Gastrocnemius medialis (tissue), 4 donors: ENCODE measurements at regions of chr22 and their contacts with region 1.

Region 1: GRCh38 chr22:36387752-36388518 is at the start of gene MYH9:
- DNase-seq: peak; percentile 99 to 100
- ATAC-seq: peak; percentile 83 to 85
- H3K4me3 ChIP-seq: peak within 1 kb of the TSS; percentile 73 to 93 (median 84)
- H3K27ac ChIP-seq: peak within 1 kb of the TSS; percentile 84 to 97 (median 92)
- H3K4me1 ChIP-seq: peaks cover 24 to 41% of the 10 kb centered on the region in 2 donors
- H3K27me3 ChIP-seq: no peaks in the 10 kb centered on the region
- CTCF ChIP-seq: peak in 1 of 5 experiments; percentile 9
- POLR2A ChIP-seq: peak; percentile 99
- total RNA-seq, gene MYH9: 38.9 to 115 (median 104) TPM

Region 2: DNA sequence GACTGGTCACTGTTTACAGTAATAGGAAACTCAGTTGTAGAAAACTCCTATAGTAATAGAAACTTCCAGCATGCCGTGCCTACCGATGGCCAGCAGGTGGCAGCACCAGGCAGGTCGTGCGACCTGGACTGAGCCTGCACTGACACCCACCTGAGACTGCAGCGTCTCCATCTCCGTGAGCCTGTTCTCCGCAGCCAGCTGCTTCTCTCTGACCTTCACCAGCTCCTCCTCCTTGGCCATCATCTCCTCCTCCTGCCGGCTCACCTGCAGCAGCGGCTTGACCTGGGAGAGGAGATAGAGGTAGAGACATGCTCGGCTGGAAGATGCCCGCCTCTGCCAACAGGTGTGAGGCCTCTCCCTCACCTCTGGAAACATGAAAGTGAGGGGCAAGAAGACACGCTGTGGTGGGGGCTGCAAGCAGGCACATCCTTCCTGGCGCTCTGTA is 86.5 kb before region 1 on chr22:
- in situ Hi-C with region 1: no loop called
- intact Hi-C with region 1: loop called (anchors 2 kb)
- DNase-seq: peak in 1 of 2 donors; percentile 65
- ATAC-seq: peak; percentile 59 to 83
- H3K4me3 ChIP-seq: no peak overlapping the region
- H3K27ac ChIP-seq: peak overlapping the region in 2 of 4 donors; percentile 29 to 31
- H3K4me1 ChIP-seq: no peaks in the 10 kb centered on the region
- H3K27me3 ChIP-seq: no peaks in the 10 kb centered on the region
- CTCF ChIP-seq: peak; percentile 78 to 97 (median 96)
- POLR2A ChIP-seq: no peak

Region 3: DNA sequence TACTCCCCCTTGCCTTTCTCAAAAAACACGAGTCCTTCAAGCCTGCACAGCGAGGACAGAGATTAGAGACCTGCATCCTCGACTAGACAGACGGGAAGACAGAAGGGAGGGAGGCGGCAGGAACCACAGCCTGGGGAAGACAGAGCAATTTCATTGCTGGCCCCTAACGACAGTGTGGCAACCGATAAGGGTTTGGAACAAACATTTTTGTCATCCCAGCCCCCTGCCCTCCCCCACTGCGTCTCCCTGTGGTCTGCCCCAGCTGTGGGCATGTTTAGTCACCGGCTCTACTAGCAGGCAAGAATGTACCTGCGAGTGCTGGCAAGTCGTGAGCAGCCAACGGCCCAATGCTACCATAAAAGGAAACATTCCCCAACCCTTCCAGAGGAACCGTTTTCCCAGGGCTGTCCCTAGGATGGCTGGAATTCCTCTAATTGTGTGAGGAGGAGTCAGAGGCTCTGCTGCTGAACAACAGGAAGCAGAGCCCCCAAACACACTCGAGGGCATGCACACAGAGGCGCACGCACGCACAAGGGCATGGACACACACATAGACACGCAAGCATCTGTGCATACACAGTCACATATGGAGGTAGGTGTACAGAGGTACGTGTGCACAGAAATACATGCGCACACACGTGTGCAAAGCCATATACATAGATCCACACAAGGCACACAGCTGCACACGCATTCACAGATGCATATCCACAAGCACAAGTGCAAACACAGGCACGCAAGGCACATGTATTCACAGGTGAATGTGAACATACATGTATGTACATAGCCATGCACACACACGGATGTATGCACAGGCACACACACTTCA is 58.5 kb before region 1 on chr22:
- in situ Hi-C with region 1: no loop called
- intact Hi-C with region 1: loop called (anchors 2 kb)
- DNase-seq: no peak
- ATAC-seq: peak; percentile 4 to 11
- H3K4me3 ChIP-seq: peak overlapping the region in 2 of 4 donors; percentile 5 to 15
- H3K27ac ChIP-seq: peak overlapping the region; percentile 82 to 84 (median 84)
- H3K4me1 ChIP-seq: peaks cover 85 to 86% of the 10 kb centered on the region in 2 donors
- H3K27me3 ChIP-seq: no peaks in the 10 kb centered on the region
- CTCF ChIP-seq: no peak
- POLR2A ChIP-seq: peak in 1 of 2 donors; percentile 13

Region 4: DNA sequence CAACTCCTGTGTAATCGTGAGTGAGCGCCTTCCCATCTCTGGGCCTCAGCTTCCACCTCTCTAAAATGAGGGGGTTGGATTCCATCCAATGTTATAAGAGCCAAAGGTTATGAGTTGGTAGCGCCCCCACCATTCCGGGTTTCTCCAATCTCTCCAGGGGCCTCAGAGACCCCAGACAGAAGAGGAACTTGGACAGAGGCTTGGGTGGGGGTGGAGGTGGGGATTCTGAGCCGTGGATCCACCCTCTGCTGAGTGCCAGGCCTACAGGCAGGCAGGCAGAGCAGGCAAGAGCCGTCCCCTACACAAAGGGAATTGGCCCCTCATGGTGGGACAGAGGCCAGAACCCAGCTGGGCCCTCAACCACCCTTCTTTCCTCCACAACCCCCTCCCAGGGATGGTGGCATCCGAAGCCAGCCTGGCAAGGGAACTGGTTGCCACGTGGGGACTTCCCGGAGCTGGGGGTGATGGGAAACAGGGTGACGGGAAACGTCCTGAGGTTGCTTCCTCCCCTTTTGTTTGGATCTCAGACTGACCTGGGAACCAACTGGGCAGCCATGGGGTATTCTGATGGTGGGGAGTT is 61.8 kb after region 1 on chr22:
- in situ Hi-C with region 1: loop called in 1 of 4 experiments (anchors 10 kb)
- intact Hi-C with region 1: loop called (anchors 2 kb)
- DNase-seq: no peak
- ATAC-seq: no peak
- H3K4me3 ChIP-seq: no peak overlapping the region
- H3K27ac ChIP-seq: peak overlapping the region; percentile 31 to 98 (median 80)
- H3K4me1 ChIP-seq: peaks cover 15 to 34% of the 10 kb centered on the region in 2 donors
- H3K27me3 ChIP-seq: no peaks in the 10 kb centered on the region
- CTCF ChIP-seq: no peak
- POLR2A ChIP-seq: no peak

Region 5: GRCh38 chr22:36461669-36462649 is 74.0 kb after region 1 on chr22:
- in situ Hi-C with region 1: no loop called
- intact Hi-C with region 1: loop called (anchors 1 kb)
- DNase-seq: peak; percentile 50 to 89
- ATAC-seq: peak; percentile 7 to 45
- H3K4me3 ChIP-seq: no peak overlapping the region
- H3K27ac ChIP-seq: peak overlapping the region; percentile 91 to 98 (median 94)
- H3K4me1 ChIP-seq: peaks cover 58 to 68% of the 10 kb centered on the region in 2 donors
- H3K27me3 ChIP-seq: no peaks in the 10 kb centered on the region
- CTCF ChIP-seq: no peak
- POLR2A ChIP-seq: peak in 1 of 2 donors; percentile 21

Region 6: DNA sequence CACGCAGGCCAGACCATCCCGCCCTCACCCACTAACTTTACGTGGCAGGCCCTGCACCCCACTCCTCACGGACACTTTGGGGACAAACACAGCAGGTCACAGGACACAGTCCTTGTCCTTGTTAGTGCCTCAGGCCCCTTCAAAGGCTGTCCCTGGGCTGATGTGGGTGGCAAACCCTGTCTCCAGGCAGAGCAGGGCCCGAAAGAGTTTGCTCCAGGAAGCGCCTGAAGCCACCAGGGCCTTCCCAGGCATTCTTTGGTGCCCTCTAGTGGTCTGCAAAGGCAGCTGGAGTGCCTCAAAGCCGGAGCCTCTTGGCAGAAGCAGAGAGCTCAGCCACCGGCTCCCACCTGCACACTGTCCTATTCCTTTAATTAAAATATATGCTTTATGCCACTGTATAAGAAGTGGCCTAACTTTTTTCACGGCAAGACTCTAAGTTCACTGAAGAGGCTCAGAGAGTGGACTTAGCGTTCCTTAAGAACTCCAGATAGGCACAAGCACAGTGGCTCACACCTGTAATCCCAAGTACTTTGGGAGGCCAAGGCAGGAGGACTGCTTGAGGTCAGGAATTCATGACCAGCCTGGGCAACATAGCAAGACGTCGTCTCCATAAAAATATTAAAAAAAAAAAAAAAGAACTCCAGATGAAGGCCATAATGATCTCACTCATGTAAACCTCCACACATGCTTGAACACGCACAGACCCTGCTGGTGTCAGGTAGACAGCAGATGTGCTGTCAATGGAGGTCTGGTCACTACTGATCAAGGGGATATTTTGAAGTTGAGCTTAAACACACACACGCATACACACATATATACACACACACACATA is 82.4 kb after region 1 on chr22:
- in situ Hi-C with region 1: no loop called
- intact Hi-C with region 1: loop called (anchors 1 kb)
- DNase-seq: peak; percentile 68 to 83
- ATAC-seq: peak; percentile 50 to 55
- H3K4me3 ChIP-seq: no peak overlapping the region
- H3K27ac ChIP-seq: peak overlapping the region; percentile 91 to 98 (median 94)
- H3K4me1 ChIP-seq: peaks cover 47 to 48% of the 10 kb centered on the region in 2 donors
- H3K27me3 ChIP-seq: no peaks in the 10 kb centered on the region
- CTCF ChIP-seq: peak; percentile 85 to 98 (median 96)
- POLR2A ChIP-seq: no peak